GM12878 (cell line): ENCODE measurements at regions of chr6 and their contacts with region 1.

Region 1: GRCh38 chr6:2862712-2863181 is 21.1 kb upstream of the SERPINB1 start:
- DNase-seq: peak; percentile 93
- ATAC-seq: peak; percentile 67
- H3K4me3 ChIP-seq: no peak overlapping the region
- H3K27ac ChIP-seq: peak overlapping the region; percentile 86
- H3K4me1 ChIP-seq: peaks cover 67% of the 10 kb centered on the region
- H3K27me3 ChIP-seq: no peaks in the 10 kb centered on the region
- CTCF ChIP-seq: no peak
- EP300 ChIP-seq: peak; percentile 91 to 98
- POLR2A ChIP-seq: no peak
- RAD21 ChIP-seq: no peak

Region 2: GRCh38 chr6:2841264-2842138 is 21.2 kb before region 1 on chr6 and contains the start of gene SERPINB1:
- CTCF ChIA-PET with region 1: interaction called, 57 read pairs
- POLR2A ChIA-PET with region 1: interaction called, 18 read pairs
- RAD21 ChIA-PET with region 1: interaction called, 77 read pairs
- SMC1A ChIA-PET with region 1: interaction called, 79 read pairs
- in situ Hi-C with region 1: no loop called
- intact Hi-C with region 1: loop called (anchors 2 kb)
- DNase-seq: no peak
- ATAC-seq: peak; percentile 76
- H3K4me3 ChIP-seq: no peak within 1 kb of the TSS; the same call in 1 of the 2 replicates
- H3K27ac ChIP-seq: no peak within 1 kb of the TSS
- H3K4me1 ChIP-seq: peaks cover 4% of the 10 kb centered on the region; the same call in 1 of the 2 replicates
- H3K27me3 ChIP-seq: peaks cover 0 to 5% of the 10 kb centered on the region in 2 experiments; a peak in 3 of 4 replicates
- CTCF ChIP-seq: 0 out of 6 replicates have a peak, but pooled peaks of 1 of the 3 experiments have one; percentile 0
- EP300 ChIP-seq: no peak
- POLR2A ChIP-seq: peak; percentile 51; the same call in 1 of the 2 replicates
- RAD21 ChIP-seq: no peak
- polyA plus RNA-seq, gene SERPINB1: 0.82 to 1.8 TPM

Region 3: GRCh38 chr6:2891768-2892170 is 29.0 kb after region 1 on chr6:
- CTCF ChIA-PET with region 1: interaction called, 25 read pairs
- POLR2A ChIA-PET with region 1: interaction called, 126 read pairs
- RAD21 ChIA-PET with region 1: interaction called, 23 read pairs
- SMC1A ChIA-PET with region 1: interaction called, 136 read pairs
- in situ Hi-C with region 1: no loop called
- intact Hi-C with region 1: no loop called
- DNase-seq: peak; percentile 89
- ATAC-seq: peak; percentile 93
- H3K4me3 ChIP-seq: peak overlapping the region; percentile 20; the same call in 1 of the 2 replicates
- H3K27ac ChIP-seq: no peak overlapping the region
- H3K4me1 ChIP-seq: peaks cover 4% of the 10 kb centered on the region; the same call in 1 of the 2 replicates
- H3K27me3 ChIP-seq: no peaks in the 10 kb centered on the region
- CTCF ChIP-seq: no peak
- EP300 ChIP-seq: peak; percentile 18 to 76; a peak in 1 of 4 replicates
- POLR2A ChIP-seq: peak; percentile 85
- RAD21 ChIP-seq: no peak

Region 4: GRCh38 chr6:2911171-2911570 is 48.4 kb after region 1 on chr6:
- CTCF ChIA-PET with region 1: interaction called, 17 read pairs
- POLR2A ChIA-PET with region 1: interaction called, 5 read pairs
- RAD21 ChIA-PET with region 1: interaction called, 13 read pairs
- SMC1A ChIA-PET with region 1: interaction called, 8 read pairs
- in situ Hi-C with region 1: no loop called
- intact Hi-C with region 1: no loop called
- DNase-seq: no peak
- ATAC-seq: peak; percentile 84
- H3K4me3 ChIP-seq: no peak overlapping the region
- H3K27ac ChIP-seq: no peak overlapping the region
- H3K4me1 ChIP-seq: peaks cover 13% of the 10 kb centered on the region
- H3K27me3 ChIP-seq: no peaks in the 10 kb centered on the region; a peak in 1 of 4 replicates
- CTCF ChIP-seq: no peak
- EP300 ChIP-seq: no peak
- POLR2A ChIP-seq: no peak
- RAD21 ChIP-seq: no peak

Region 5: GRCh38 chr6:3209114-3210023 is 346.6 kb after region 1 on chr6:
- CTCF ChIA-PET with region 1: no interaction called
- POLR2A ChIA-PET with region 1: no interaction called
- RAD21 ChIA-PET with region 1: no interaction called
- SMC1A ChIA-PET with region 1: no interaction called
- in situ Hi-C with region 1: no loop called
- intact Hi-C with region 1: loop called (anchors 10 kb)
- DNase-seq: peak; percentile 60
- ATAC-seq: peak; percentile 78
- H3K4me3 ChIP-seq: no peak overlapping the region
- H3K27ac ChIP-seq: peak overlapping the region; percentile 71
- H3K4me1 ChIP-seq: peaks cover 44% of the 10 kb centered on the region
- H3K27me3 ChIP-seq: no peaks in the 10 kb centered on the region
- CTCF ChIP-seq: peak in 1 of 3 experiments; percentile 30; a peak in 2 of 6 replicates
- EP300 ChIP-seq: peak; percentile 46 to 71; a peak in 2 of 4 replicates
- POLR2A ChIP-seq: no peak
- RAD21 ChIP-seq: peak; percentile 39